ENCODE measurements at regions of chr12 and their contacts with region 1.

Region 1: GRCh38 chr12:112382232-112382796 is at the start of gene HECTD4:
- DNase-seq: peak; percentile 94 to 98 (median 95)
- H3K4me3 ChIP-seq: peak within 1 kb of the TSS; percentile 67 to 83 (median 72)
- H3K27ac ChIP-seq: peak within 1 kb of the TSS; percentile 83 to 91
- H3K4me1 ChIP-seq: peaks cover 0 to 11% (median 7%) of the 10 kb centered on the region in 3 donors
- H3K27me3 ChIP-seq: no peaks in the 10 kb centered on the region
- CTCF ChIP-seq: no peak
- total RNA-seq, gene HECTD4: 53.1 TPM

Region 2: DNA sequence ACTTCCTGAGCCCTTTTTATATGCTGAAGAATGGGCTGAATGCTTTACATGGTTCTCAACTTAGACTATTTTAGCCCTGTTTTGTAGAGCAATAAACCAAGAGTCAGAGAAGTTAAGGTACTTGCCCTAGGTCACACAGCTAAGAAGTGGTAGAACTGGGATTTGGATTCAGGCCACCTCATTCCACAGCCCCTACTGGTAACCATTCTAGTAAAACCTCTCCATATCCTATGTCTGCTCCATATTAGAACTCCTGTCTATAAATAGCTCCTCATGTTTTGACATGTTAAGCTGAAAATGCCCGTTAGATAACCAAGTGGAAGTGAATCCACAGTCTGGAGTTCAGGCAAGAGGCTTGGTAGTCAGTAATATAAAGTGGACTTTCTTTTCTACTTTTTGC is 111.6 kb before region 1 on chr12:
- intact Hi-C with region 1: loop called (anchors 10 kb)
- DNase-seq: no peak
- H3K4me3 ChIP-seq: no peak overlapping the region
- H3K27ac ChIP-seq: no peak overlapping the region
- H3K4me1 ChIP-seq: peaks cover 0 to 4% (median 3%) of the 10 kb centered on the region in 3 donors
- H3K27me3 ChIP-seq: no peaks in the 10 kb centered on the region
- CTCF ChIP-seq: no peak

Region 3: GRCh38 chr12:113500782-113501311 is 1118.5 kb after region 1 on chr12:
- intact Hi-C with region 1: no loop called
- DNase-seq: no peak
- H3K4me3 ChIP-seq: no peak overlapping the region
- H3K27ac ChIP-seq: no peak overlapping the region
- H3K4me1 ChIP-seq: no peaks in the 10 kb centered on the region
- H3K27me3 ChIP-seq: no peaks in the 10 kb centered on the region
- CTCF ChIP-seq: no peak

Measured in kidney (tissue), 22 donors.